Activated B cell treated with CpG ODN at 0.5 μM for 24 hours (primary cell): ENCODE measurements at regions of chr6 and their contacts with region 1.

Region 1: GRCh38 chr6:41318654-41319565 is 16.5 kb upstream of the NCR2 start:
- DNase-seq: peak; percentile 81
- ATAC-seq: peak; percentile 99
- H3K4me3 Mint-ChIP-seq: peak overlapping the region; percentile 80
- H3K27ac Mint-ChIP-seq: peak overlapping the region; percentile 76
- H3K4me1 Mint-ChIP-seq: peaks cover 47% of the 10 kb centered on the region
- H3K27me3 Mint-ChIP-seq: no peaks in the 10 kb centered on the region
- CTCF ChIP-seq: peak; percentile 90

Region 2: GRCh38 chr6:40852779-40853373 is 466.0 kb before region 1 on chr6:
- CTCF ChIA-PET with region 1: no interaction called
- POLR2A ChIA-PET with region 1: no interaction called
- intact Hi-C with region 1: no loop called
- DNase-seq: no peak
- ATAC-seq: no peak
- H3K4me3 Mint-ChIP-seq: no peak overlapping the region
- H3K27ac Mint-ChIP-seq: no peak overlapping the region
- H3K4me1 Mint-ChIP-seq: peaks cover 2% of the 10 kb centered on the region
- H3K27me3 Mint-ChIP-seq: peaks cover 7% of the 10 kb centered on the region
- CTCF ChIP-seq: no peak

Region 3: DNA sequence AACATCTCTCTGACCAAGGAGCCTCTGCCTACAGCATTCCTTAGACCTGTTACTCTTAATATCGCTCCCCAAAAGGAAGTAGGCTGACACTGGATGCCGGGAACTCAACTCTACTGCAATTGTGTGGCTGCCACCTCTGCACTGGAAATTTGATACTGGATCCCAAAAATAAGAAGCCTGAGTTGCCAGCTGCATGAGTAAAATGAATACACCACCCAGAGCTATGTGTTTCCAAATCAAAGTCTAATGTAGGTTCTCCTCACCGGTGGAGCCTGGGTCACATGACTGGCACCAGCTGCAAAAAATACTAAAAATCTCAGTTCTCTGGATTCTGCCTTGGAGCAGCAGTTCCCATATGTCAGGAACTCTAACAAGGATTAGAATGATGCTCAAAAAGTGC is 316.7 kb before region 1 on chr6:
- CTCF ChIA-PET with region 1: no interaction called
- POLR2A ChIA-PET with region 1: no interaction called
- intact Hi-C with region 1: loop called (anchors 1 kb)
- DNase-seq: no peak
- ATAC-seq: no peak
- H3K4me3 Mint-ChIP-seq: no peak overlapping the region
- H3K27ac Mint-ChIP-seq: no peak overlapping the region
- H3K4me1 Mint-ChIP-seq: no peaks in the 10 kb centered on the region
- H3K27me3 Mint-ChIP-seq: peaks cover 27% of the 10 kb centered on the region
- CTCF ChIP-seq: no peak

Region 4: GRCh38 chr6:41092421-41093140 is 226.3 kb before region 1 on chr6:
- CTCF ChIA-PET with region 1: interaction called, 6 read pairs
- POLR2A ChIA-PET with region 1: no interaction called
- intact Hi-C with region 1: loop called (anchors 1 kb)
- DNase-seq: no peak
- ATAC-seq: no peak
- H3K4me3 Mint-ChIP-seq: no peak overlapping the region
- H3K27ac Mint-ChIP-seq: no peak overlapping the region
- H3K4me1 Mint-ChIP-seq: no peaks in the 10 kb centered on the region
- H3K27me3 Mint-ChIP-seq: no peaks in the 10 kb centered on the region
- CTCF ChIP-seq: no peak

Region 5: GRCh38 chr6:41191569-41191968 is 127.3 kb before region 1 on chr6:
- CTCF ChIA-PET with region 1: interaction called, 3 read pairs
- POLR2A ChIA-PET with region 1: no interaction called
- intact Hi-C with region 1: loop called (anchors 1 kb)
- DNase-seq: no peak
- ATAC-seq: peak; percentile 61
- H3K4me3 Mint-ChIP-seq: no peak overlapping the region
- H3K27ac Mint-ChIP-seq: peak overlapping the region; percentile 41
- H3K4me1 Mint-ChIP-seq: peaks cover 64% of the 10 kb centered on the region
- H3K27me3 Mint-ChIP-seq: no peaks in the 10 kb centered on the region
- CTCF ChIP-seq: no peak

Region 6: GRCh38 chr6:41278699-41279405 is 40.1 kb before region 1 on chr6:
- CTCF ChIA-PET with region 1: interaction called, 23 read pairs
- POLR2A ChIA-PET with region 1: no interaction called
- intact Hi-C with region 1: loop called (anchors 1 kb)
- DNase-seq: peak; percentile 29
- ATAC-seq: peak; percentile 86
- H3K4me3 Mint-ChIP-seq: peak overlapping the region; percentile 16
- H3K27ac Mint-ChIP-seq: no peak overlapping the region
- H3K4me1 Mint-ChIP-seq: peaks cover 34% of the 10 kb centered on the region
- H3K27me3 Mint-ChIP-seq: peaks cover 1% of the 10 kb centered on the region
- CTCF ChIP-seq: no peak

Region 7: GRCh38 chr6:41306187-41306854 is 12.6 kb before region 1 on chr6:
- CTCF ChIA-PET with region 1: interaction called, 78 read pairs
- POLR2A ChIA-PET with region 1: interaction called, 5 read pairs
- intact Hi-C with region 1: loop called (anchors 1 kb)
- DNase-seq: no peak
- ATAC-seq: no peak
- H3K4me3 Mint-ChIP-seq: no peak overlapping the region
- H3K27ac Mint-ChIP-seq: no peak overlapping the region
- H3K4me1 Mint-ChIP-seq: peaks cover 36% of the 10 kb centered on the region
- H3K27me3 Mint-ChIP-seq: no peaks in the 10 kb centered on the region
- CTCF ChIP-seq: peak; percentile 45

Region 8: DNA sequence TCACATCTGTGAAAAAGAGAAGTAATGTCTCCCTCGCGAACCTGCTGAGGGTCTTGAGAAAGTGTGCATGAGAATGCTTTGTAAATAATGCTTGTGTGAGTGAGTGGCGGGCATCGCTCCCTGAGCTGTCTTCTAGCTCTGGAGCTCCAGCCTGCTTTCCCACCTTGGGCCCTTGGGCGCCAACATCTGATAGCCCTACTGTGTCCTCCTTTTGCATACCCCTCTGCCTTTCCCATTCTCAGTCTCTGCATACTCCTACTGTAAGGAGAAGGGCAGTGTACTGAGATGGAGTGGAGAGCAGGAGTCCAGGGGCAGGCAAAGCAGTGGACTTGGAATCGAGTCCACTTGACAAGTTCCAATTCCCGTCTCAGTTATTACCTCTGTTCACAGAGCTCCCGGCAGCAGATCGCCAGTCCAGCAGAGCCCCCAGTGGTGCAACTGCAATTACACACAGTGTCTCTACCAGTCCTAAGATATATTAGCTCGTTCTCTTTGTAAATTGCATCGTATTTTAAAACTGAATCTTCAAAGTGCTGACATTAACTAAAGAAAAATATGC is 15.7 kb after region 1 on chr6:
- CTCF ChIA-PET with region 1: interaction called, 37 read pairs
- POLR2A ChIA-PET with region 1: interaction called, 17 read pairs
- intact Hi-C with region 1: no loop called
- DNase-seq: no peak
- ATAC-seq: no peak
- H3K4me3 Mint-ChIP-seq: peak overlapping the region; percentile 57
- H3K27ac Mint-ChIP-seq: peak overlapping the region; percentile 90
- H3K4me1 Mint-ChIP-seq: peaks cover 49% of the 10 kb centered on the region
- H3K27me3 Mint-ChIP-seq: no peaks in the 10 kb centered on the region
- CTCF ChIP-seq: no peak

Region 9: GRCh38 chr6:42326248-42326647 is 1007.3 kb after region 1 on chr6:
- CTCF ChIA-PET with region 1: no interaction called
- POLR2A ChIA-PET with region 1: no interaction called
- intact Hi-C with region 1: no loop called
- DNase-seq: no peak
- ATAC-seq: no peak
- H3K4me3 Mint-ChIP-seq: no peak overlapping the region
- H3K27ac Mint-ChIP-seq: no peak overlapping the region
- H3K4me1 Mint-ChIP-seq: no peaks in the 10 kb centered on the region
- H3K27me3 Mint-ChIP-seq: no peaks in the 10 kb centered on the region
- CTCF ChIP-seq: no peak